Activated T-helper 1 cell treated with anti-CD3 and anti-CD28 coated beads, Interleukin-12 subunit alpha, Interleukin-12 subunit beta, Interleukin-2, Interleukin-4 antibody, amounts not matched to agents 30 ng/mL and 10 ng/mL and 1 ng/mL, durations not matched to agents 14 hours and 24 hours and 36 hours (primary cell): ENCODE measurements at regions of chr16 and their contacts with region 1.

Region 1: GRCh38 chr16:84277237-84277823 is 17.3 kb upstream of the WFDC1 start:
- DNase-seq: peak; percentile 53
- H3K4me3 Mint-ChIP-seq: no peak overlapping the region
- H3K27ac Mint-ChIP-seq: no peak overlapping the region
- H3K4me1 Mint-ChIP-seq: no peaks in the 10 kb centered on the region
- H3K27me3 Mint-ChIP-seq: no peaks in the 10 kb centered on the region

Region 2: DNA sequence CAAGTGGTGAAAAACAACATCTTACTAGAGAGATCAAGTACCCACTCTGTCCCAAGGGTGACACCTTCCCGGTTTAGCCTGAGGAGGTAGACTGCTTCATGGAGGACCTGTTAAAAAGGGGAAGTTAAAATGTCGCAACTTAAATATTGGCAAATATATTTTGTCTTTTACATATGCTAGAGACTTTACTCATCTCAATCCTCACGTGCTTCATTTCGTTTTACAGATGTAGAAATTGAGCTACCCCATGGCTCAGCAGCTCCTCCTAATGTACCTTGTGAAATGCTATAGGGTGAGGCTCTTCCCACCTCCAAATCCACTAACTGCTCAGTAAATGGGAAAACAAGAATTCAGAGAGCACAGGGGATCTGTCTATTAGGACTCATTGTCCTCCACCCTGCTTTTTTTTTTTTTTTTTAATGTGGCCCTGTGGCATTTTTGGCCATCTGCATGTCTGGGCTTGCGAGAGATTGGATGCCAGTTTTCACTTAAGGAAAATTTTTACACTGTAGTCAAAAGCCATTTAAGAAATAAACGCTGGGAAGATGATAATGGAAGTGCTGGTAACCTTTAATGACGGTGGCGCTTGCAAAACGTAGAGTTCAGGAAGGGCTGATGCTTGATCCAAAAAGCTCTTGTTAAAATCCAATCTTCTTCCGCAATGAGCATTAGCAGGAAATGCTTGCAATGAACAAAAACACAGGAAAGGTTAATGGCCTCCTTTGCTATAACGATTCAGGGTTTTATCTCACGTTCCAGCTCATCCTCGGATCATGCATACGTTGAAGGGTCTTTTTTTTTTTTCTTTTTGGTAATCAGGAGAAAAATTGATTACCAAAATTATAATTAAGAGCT is 429.7 kb before region 1 on chr16:
- intact Hi-C with region 1: no loop called
- DNase-seq: no peak
- H3K4me3 Mint-ChIP-seq: no peak overlapping the region
- H3K27ac Mint-ChIP-seq: no peak overlapping the region
- H3K4me1 Mint-ChIP-seq: no peaks in the 10 kb centered on the region
- H3K27me3 Mint-ChIP-seq: peaks cover 10% of the 10 kb centered on the region

Region 3: GRCh38 chr16:84484579-84485254 is 207.4 kb after region 1 on chr16:
- intact Hi-C with region 1: loop called (anchors 1 kb)
- DNase-seq: no peak
- H3K4me3 Mint-ChIP-seq: no peak overlapping the region
- H3K27ac Mint-ChIP-seq: no peak overlapping the region
- H3K4me1 Mint-ChIP-seq: no peaks in the 10 kb centered on the region
- H3K27me3 Mint-ChIP-seq: no peaks in the 10 kb centered on the region

Region 4: GRCh38 chr16:84952335-84953189 is 675.2 kb after region 1 on chr16:
- intact Hi-C with region 1: loop called (anchors 10 kb)
- DNase-seq: peak; percentile 55
- H3K4me3 Mint-ChIP-seq: no peak overlapping the region
- H3K27ac Mint-ChIP-seq: no peak overlapping the region
- H3K4me1 Mint-ChIP-seq: no peaks in the 10 kb centered on the region
- H3K27me3 Mint-ChIP-seq: no peaks in the 10 kb centered on the region